Naive thymus-derived CD4-positive, alpha-beta T cell (primary cell): ENCODE measurements at regions of chr11 and their contacts with region 1.

Region 1: GRCh38 chr11:128463371-128463829 is 124.0 kb downstream of the ETS1 start:
- DNase-seq: no peak
- ATAC-seq: no peak
- H3K4me3 ChIP-seq: peak overlapping the region; percentile 37
- H3K4me3 Mint-ChIP-seq: peak overlapping the region; percentile 73 to 99 (median 80)
- H3K27ac ChIP-seq: peak overlapping the region; percentile 97
- H3K27ac Mint-ChIP-seq: peak overlapping the region; percentile 88 to 100 (median 98)
- H3K4me1 ChIP-seq: peaks cover 74 to 86% of the 10 kb centered on the region in 2 donors
- H3K4me1 Mint-ChIP-seq: peaks cover 64 to 100% (median 93%) of the 10 kb centered on the region in 7 donors
- H3K27me3 ChIP-seq: no peaks in the 10 kb centered on the region
- H3K27me3 Mint-ChIP-seq: no peaks in the 10 kb centered on the region

Region 2: DNA sequence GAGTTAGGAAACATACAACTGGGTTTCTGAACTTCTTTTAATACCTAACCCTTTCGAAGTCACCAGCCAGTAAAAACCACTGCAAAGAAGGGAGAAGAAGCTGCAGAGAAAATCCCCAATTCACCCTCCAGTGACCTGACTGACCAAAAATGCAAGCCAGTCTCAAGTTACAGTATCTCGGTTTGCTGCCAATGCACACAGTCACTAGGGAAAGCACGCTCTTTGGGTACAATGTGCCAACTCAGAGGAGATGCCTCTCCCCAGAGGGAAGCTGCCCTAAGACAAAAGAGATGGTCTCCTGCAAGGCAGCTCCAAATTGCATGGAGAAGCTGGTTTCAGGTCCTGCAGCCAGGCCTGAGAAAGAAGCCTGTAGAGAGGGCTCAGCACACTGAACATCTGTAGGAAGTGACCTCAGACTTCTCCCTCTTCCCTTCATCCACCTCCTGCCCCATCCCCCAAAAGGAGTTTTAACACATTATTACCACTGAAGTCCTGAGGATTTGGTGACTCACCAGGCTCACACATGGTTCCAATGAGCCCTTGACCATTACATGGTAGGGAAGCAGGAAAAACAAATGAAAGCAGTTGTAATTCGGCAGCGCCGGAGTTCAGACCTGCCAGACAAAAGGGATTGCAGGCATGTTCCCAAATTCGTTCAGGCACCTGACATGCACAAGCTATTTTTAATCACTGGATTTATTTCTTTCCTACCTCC is 33.8 kb after region 1 on chr11:
- CTCF ChIA-PET with region 1: interaction called, 3 read pairs
- POLR2A ChIA-PET with region 1: interaction called, 560 read pairs
- intact Hi-C with region 1: loop called in 1 of 2 experiments (anchors 1 kb)
- DNase-seq: no peak
- ATAC-seq: peak; percentile 32
- H3K4me3 ChIP-seq: peak overlapping the region; percentile 36
- H3K4me3 Mint-ChIP-seq: peak overlapping the region; percentile 81 to 100 (median 94)
- H3K27ac ChIP-seq: peak overlapping the region; percentile 97
- H3K27ac Mint-ChIP-seq: peak overlapping the region; percentile 89 to 99 (median 95)
- H3K4me1 ChIP-seq: peaks cover 90 to 95% of the 10 kb centered on the region in 2 donors
- H3K4me1 Mint-ChIP-seq: peaks cover 83 to 100% (median 97%) of the 10 kb centered on the region in 7 donors
- H3K27me3 ChIP-seq: no peaks in the 10 kb centered on the region
- H3K27me3 Mint-ChIP-seq: no peaks in the 10 kb centered on the region